ENCODE measurements at regions of chr4 and their contacts with region 1.

Region 1: DNA sequence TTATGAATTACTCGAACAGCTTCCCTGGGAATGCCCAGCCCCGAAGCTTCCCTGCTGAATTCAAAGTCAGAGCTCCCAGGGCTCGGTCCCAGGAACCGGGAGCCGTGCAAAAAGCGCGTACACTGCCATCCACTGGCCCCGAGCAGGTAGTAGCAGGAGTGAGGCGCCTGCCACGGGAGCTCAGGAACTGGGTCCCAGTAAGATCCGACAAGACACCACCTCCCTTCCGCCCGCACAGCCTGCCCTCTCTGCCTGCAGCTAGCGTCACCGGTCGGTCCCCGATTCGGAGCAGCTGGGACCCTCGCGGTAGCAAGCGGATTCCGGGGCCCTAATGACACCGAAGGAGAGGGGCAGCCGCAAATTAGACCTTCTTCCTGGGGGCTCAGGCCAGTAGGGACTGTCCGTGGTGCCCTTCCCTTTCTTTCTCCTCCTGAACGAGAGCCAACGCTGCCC is 1.2 kb downstream of the CORIN start:
- DNase-seq: peak; percentile 49 to 74
- ATAC-seq: peak; percentile 97 to 99
- H3K4me3 ChIP-seq: peak overlapping the region; percentile 58
- H3K27ac ChIP-seq: peak overlapping the region; percentile 31 to 78; a peak in 3 of 6 replicates
- H3K4me1 ChIP-seq: 0 out of 3 replicates have a peak, but pooled peaks cover 3% of the 10 kb centered on the region
- CTCF ChIP-seq: peak; percentile 43; the same call in 2 of the 3 replicates
- EP300 ChIP-seq: no peak
- POLR2A ChIP-seq: no peak
- RAD21 ChIP-seq: peak; percentile 57 to 63; a peak in 4 of 5 replicates

Region 2: GRCh38 chr4:47674144-47674543 is 162.5 kb before region 1 on chr4:
- CTCF ChIA-PET with region 1: interaction called, 12 read pairs
- POLR2A ChIA-PET with region 1: no interaction called
- DNase-seq: no peak
- ATAC-seq: no peak
- H3K4me3 ChIP-seq: no peak overlapping the region
- H3K27ac ChIP-seq: no peak overlapping the region
- H3K4me1 ChIP-seq: no peaks in the 10 kb centered on the region
- CTCF ChIP-seq: no peak
- EP300 ChIP-seq: no peak
- POLR2A ChIP-seq: no peak
- RAD21 ChIP-seq: no peak

Region 3: GRCh38 chr4:47704693-47705325 is 131.9 kb before region 1 on chr4:
- CTCF ChIA-PET with region 1: interaction called, 13 read pairs
- POLR2A ChIA-PET with region 1: no interaction called
- DNase-seq: peak in 1 of 2 experiments; percentile 30
- ATAC-seq: peak; percentile 87 to 91
- H3K4me3 ChIP-seq: no peak overlapping the region
- H3K27ac ChIP-seq: no peak overlapping the region
- H3K4me1 ChIP-seq: no peaks in the 10 kb centered on the region
- CTCF ChIP-seq: no peak; the same call in 2 of the 3 replicates
- EP300 ChIP-seq: no peak
- POLR2A ChIP-seq: no peak
- RAD21 ChIP-seq: peak in 1 of 2 experiments; percentile 42; a peak in 3 of 5 replicates

Measured in A549 (cell line).